ENCODE measurements at regions of chr3 and their contacts with region 1.

Region 1: GRCh38 chr3:158762701-158763100 is 30.4 kb upstream of the RARRES1 start:
- DNase-seq: no peak
- H3K4me3 ChIP-seq: no peak overlapping the region
- CTCF ChIP-seq: no peak

Region 2: DNA sequence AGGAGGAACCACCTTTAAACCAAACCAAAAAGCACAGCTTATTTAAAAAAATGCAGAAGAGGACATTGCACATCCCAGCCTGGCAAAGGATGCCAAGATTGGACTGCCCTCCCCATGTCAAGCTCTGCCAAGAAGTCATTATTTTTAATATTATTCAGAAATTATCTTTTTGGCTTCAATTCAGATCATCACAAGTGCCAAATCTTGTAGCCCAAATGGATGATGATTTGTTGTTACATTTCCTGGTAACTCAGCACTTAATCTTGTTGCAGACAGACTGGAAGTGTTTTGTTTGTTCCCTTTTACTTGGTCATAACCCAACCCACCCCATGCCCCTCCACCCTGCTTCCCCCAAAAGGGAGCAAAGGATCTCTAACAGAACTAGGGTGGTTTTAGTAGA is 62.1 kb before region 1 on chr3:
- in situ Hi-C with region 1: no loop called
- DNase-seq: no peak
- H3K4me3 ChIP-seq: no peak overlapping the region
- CTCF ChIP-seq: no peak

Region 3: DNA sequence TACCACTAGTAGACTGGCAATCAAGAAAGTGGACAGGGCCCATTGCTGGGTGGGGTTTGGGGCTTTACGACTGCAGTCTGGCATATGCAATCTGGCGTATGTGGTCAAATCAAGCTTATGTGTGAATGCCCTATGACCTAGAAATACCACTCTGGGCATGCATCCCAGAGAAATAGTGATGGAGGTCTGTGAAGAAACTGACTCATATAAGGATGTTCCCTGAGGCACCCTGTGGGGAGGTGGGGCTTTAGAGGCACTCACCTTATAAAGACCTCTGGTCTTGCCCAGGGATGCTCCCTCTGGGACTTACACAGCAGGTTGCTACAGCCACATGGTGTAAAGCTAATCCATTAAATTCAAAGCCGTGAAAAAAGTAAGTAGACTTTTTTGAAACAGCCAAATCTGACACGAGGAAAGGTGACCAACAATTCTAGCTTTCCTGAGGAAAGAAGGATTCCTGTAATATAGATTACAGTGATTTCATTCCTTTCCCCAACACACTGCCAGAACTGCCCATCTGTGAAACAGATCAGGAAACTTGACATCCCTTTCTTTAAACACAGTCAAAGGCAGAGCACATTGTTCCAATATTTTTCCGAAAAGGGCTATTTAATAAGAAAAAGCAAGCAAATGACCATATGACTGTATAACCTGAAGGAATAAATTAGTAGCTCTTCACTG is 44.1 kb before region 1 on chr3:
- in situ Hi-C with region 1: loop called (anchors 5 kb)
- DNase-seq: peak; percentile 98
- H3K4me3 ChIP-seq: no peak overlapping the region
- CTCF ChIP-seq: no peak

Region 4: GRCh38 chr3:158801696-158802408 is 39.2 kb after region 1 on chr3 and contains the start of gene MFSD1:
- in situ Hi-C with region 1: no loop called
- DNase-seq: peak; percentile 70
- H3K4me3 ChIP-seq: peak within 1 kb of the TSS; percentile 73
- CTCF ChIP-seq: no peak

Measured in astrocyte of the cerebellum (primary cell).